Activated B cell treated with CpG ODN at 0.5 μM for 24 hours (primary cell): ENCODE measurements at regions of chr12 and their contacts with region 1.

Region 1: GRCh38 chr12:109844983-109845823 is 12.0 kb upstream of the TRPV4 start:
- DNase-seq: peak; percentile 90
- ATAC-seq: peak; percentile 99
- H3K4me3 Mint-ChIP-seq: no peak overlapping the region
- H3K27ac Mint-ChIP-seq: peak overlapping the region; percentile 9
- H3K4me1 Mint-ChIP-seq: peaks cover 6% of the 10 kb centered on the region
- H3K27me3 Mint-ChIP-seq: no peaks in the 10 kb centered on the region
- CTCF ChIP-seq: peak; percentile 69

Region 2: DNA sequence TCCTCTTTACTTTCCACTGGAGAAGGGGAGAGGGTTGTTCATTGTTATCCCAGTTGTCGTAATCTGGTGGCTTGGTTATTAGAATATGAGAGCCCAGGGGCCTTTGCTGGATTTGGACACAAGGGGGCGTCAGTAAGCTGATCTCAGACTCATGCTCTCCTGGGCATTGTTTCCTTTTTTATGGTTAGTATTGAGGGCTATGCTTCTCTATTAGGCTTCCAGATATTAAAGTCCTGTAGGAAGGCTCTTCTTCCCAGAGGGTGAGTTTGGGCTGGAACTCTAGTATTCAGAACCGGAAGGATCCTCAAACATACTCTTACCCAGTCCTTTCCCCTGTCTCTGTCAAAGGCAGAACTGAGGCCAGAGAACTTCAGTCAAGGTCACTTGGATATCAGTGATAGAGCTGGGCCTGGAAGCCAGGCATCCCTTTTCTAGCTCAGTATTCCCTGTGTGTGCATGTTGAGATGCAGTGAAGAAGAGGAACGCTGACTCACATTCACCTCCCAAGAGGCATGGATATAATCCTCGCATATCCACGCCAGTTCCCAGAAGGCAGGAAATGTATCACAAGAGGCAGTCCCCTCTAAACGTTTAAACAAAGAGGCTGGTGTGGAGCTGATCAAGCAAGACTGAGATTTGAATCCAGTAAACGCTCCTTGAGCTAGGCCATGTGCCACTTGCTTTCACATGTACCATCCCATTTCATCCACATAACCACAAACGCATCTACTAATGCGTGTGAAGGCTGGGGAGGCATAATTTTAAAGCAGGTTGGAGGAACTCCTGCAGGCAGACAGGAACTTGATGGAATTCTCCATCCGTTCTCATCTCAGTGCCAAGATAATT is 326.2 kb before region 1 on chr12:
- CTCF ChIA-PET with region 1: interaction called, 4 read pairs
- POLR2A ChIA-PET with region 1: no interaction called
- intact Hi-C with region 1: loop called (anchors 2 kb)
- DNase-seq: no peak
- ATAC-seq: no peak
- H3K4me3 Mint-ChIP-seq: no peak overlapping the region
- H3K27ac Mint-ChIP-seq: no peak overlapping the region
- H3K4me1 Mint-ChIP-seq: no peaks in the 10 kb centered on the region
- H3K27me3 Mint-ChIP-seq: no peaks in the 10 kb centered on the region
- CTCF ChIP-seq: no peak

Region 3: GRCh38 chr12:109597795-109598427 is 247.3 kb before region 1 on chr12:
- CTCF ChIA-PET with region 1: interaction called, 9 read pairs
- POLR2A ChIA-PET with region 1: no interaction called
- intact Hi-C with region 1: loop called (anchors 2 kb)
- DNase-seq: peak; percentile 48
- ATAC-seq: peak; percentile 65
- H3K4me3 Mint-ChIP-seq: no peak overlapping the region
- H3K27ac Mint-ChIP-seq: no peak overlapping the region
- H3K4me1 Mint-ChIP-seq: peaks cover 8% of the 10 kb centered on the region
- H3K27me3 Mint-ChIP-seq: no peaks in the 10 kb centered on the region
- CTCF ChIP-seq: peak; percentile 66

Region 4: DNA sequence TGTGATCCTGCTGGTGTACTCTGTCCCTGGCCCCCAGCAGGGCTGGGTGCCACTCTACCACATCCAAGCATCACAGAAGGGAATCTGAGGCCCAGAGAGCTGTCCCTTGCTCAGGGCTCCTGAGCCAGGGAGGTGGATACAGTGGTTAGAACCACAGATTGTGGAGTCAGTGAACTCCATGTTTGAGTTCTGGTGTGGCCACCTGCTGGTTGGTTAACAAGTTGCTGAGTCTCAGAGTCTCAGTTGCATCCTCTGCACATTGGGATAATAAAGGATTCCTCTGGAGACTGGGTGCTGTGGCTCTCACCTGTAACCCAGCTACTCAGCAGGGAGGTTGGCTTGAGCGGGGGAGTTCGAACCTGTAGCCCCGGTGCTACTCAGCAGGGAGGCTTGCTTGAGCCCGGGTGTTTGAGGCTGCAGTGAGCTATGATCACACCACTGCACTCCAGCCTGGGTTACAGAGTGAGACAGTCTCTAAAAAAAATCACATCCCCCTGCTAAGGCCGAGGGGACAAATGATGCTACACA is 232.2 kb before region 1 on chr12:
- CTCF ChIA-PET with region 1: no interaction called
- POLR2A ChIA-PET with region 1: no interaction called
- intact Hi-C with region 1: no loop called
- DNase-seq: no peak
- ATAC-seq: no peak
- H3K4me3 Mint-ChIP-seq: no peak overlapping the region
- H3K27ac Mint-ChIP-seq: no peak overlapping the region
- H3K4me1 Mint-ChIP-seq: no peaks in the 10 kb centered on the region
- H3K27me3 Mint-ChIP-seq: peaks cover 39% of the 10 kb centered on the region
- CTCF ChIP-seq: no peak

Region 5: GRCh38 chr12:109744986-109745942 is 99.9 kb before region 1 on chr12:
- CTCF ChIA-PET with region 1: no interaction called
- POLR2A ChIA-PET with region 1: no interaction called
- intact Hi-C with region 1: no loop called
- DNase-seq: no peak
- ATAC-seq: no peak
- H3K4me3 Mint-ChIP-seq: no peak overlapping the region
- H3K27ac Mint-ChIP-seq: no peak overlapping the region
- H3K4me1 Mint-ChIP-seq: no peaks in the 10 kb centered on the region
- H3K27me3 Mint-ChIP-seq: no peaks in the 10 kb centered on the region
- CTCF ChIP-seq: no peak

Region 6: DNA sequence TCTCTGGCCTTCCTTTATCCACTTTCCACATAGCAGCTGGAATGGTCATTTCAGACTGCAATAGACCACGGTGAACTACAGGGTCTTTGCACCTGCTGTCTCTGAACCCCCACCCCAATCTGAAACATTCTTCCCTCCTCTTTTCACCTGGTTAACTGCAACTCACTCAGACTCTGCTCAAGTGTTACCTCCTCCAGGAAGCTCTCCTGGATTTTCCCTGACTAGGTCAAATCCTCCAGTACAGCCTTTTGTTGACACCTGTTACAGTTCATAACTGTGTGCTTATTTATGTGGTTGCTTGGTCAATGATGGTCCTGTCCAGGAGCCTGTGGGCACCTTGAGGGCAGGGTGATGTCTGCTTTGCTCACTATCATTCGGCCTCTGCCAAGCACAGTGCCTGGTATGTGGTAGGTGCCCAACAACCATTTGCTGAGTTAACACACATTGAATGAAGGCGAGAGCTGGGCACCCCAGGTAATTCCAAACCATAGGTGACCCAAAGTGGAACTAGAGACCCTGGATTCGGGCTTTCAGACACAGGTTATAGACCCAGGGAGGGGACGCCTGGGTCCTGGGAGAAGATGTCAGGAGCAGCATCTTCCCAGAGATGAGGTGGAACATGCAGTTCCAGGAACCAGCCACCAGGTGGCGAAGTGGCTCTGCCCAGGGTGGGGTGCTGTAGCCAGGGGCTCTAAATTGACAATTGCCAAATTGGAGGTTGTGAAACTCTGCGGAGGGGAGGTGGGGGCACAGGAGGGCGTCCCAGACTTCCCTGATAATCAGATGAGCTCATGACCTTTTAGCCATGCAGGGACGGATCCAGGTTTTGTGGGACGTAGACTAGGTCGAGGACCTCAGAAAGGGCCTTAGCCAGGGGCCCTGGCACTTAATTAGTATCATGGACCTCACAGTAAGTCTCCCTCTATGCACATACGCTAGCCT is 40.1 kb before region 1 on chr12:
- CTCF ChIA-PET with region 1: interaction called, 23 read pairs
- POLR2A ChIA-PET with region 1: no interaction called
- intact Hi-C with region 1: loop called (anchors 1 kb)
- DNase-seq: peak; percentile 62
- ATAC-seq: peak; percentile 84
- H3K4me3 Mint-ChIP-seq: no peak overlapping the region
- H3K27ac Mint-ChIP-seq: no peak overlapping the region
- H3K4me1 Mint-ChIP-seq: peaks cover 2% of the 10 kb centered on the region
- H3K27me3 Mint-ChIP-seq: peaks cover 3% of the 10 kb centered on the region
- CTCF ChIP-seq: peak; percentile 88

Region 7: DNA sequence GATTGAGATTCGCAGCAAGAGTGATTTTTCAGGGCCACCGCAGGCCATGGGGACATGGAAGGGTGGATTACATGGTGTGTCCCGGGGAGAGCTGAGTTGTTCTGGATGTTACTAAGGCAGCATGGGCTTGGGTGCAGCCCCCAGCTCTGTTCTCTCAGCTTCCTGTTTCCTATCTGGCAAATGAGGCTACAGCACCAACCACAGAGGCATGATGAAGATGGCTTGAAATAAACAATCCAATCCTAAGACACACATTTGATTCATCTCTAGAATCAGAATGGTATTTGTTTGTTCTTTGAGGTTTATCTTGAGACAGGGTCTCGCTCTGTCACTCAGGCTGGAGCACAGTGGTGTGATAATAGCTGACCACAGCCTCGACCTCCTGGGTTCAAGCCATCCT is 13.6 kb after region 1 on chr12:
- CTCF ChIA-PET with region 1: interaction called, 10 read pairs
- POLR2A ChIA-PET with region 1: no interaction called
- intact Hi-C with region 1: no loop called
- DNase-seq: no peak
- ATAC-seq: no peak
- H3K4me3 Mint-ChIP-seq: no peak overlapping the region
- H3K27ac Mint-ChIP-seq: no peak overlapping the region
- H3K4me1 Mint-ChIP-seq: peaks cover 4% of the 10 kb centered on the region
- H3K27me3 Mint-ChIP-seq: no peaks in the 10 kb centered on the region
- CTCF ChIP-seq: no peak

Region 8: GRCh38 chr12:109888179-109889020 is 43.2 kb after region 1 on chr12:
- CTCF ChIA-PET with region 1: interaction called, 10 read pairs
- POLR2A ChIA-PET with region 1: no interaction called
- intact Hi-C with region 1: no loop called
- DNase-seq: no peak
- ATAC-seq: peak; percentile 58
- H3K4me3 Mint-ChIP-seq: peak overlapping the region; percentile 63
- H3K27ac Mint-ChIP-seq: peak overlapping the region; percentile 95
- H3K4me1 Mint-ChIP-seq: peaks cover 54% of the 10 kb centered on the region
- H3K27me3 Mint-ChIP-seq: no peaks in the 10 kb centered on the region
- CTCF ChIP-seq: no peak

Region 9: GRCh38 chr12:110012137-110012536 is 166.9 kb after region 1 on chr12:
- CTCF ChIA-PET with region 1: no interaction called
- POLR2A ChIA-PET with region 1: no interaction called
- intact Hi-C with region 1: loop called (anchors 5 kb)
- DNase-seq: peak; percentile 60
- ATAC-seq: peak; percentile 90
- H3K4me3 Mint-ChIP-seq: peak overlapping the region; percentile 84
- H3K27ac Mint-ChIP-seq: peak overlapping the region; percentile 95
- H3K4me1 Mint-ChIP-seq: peaks cover 80% of the 10 kb centered on the region
- H3K27me3 Mint-ChIP-seq: no peaks in the 10 kb centered on the region
- CTCF ChIP-seq: no peak

Region 10: DNA sequence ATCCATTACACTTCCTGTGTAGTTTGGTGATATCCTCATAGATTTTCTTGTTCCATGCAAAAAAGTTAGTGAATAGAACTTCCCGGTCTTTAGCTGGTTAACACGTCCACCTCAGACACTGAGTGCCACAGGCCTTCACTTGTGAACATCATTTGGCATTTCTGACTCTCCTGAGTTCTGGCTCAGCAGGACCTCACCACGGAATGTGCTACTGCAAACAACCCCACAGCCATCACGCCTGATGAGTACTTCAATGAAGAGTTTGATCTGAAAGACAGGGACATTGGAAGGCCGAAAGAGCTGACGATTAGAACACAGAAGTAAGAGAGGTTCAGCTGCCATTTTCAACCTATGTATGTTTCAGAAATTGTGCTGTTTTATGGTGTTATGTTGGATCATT is 183.1 kb after region 1 on chr12:
- CTCF ChIA-PET with region 1: no interaction called
- POLR2A ChIA-PET with region 1: no interaction called
- intact Hi-C with region 1: no loop called
- DNase-seq: no peak
- ATAC-seq: no peak
- H3K4me3 Mint-ChIP-seq: no peak overlapping the region
- H3K27ac Mint-ChIP-seq: no peak overlapping the region
- H3K4me1 Mint-ChIP-seq: peaks cover 13% of the 10 kb centered on the region
- H3K27me3 Mint-ChIP-seq: no peaks in the 10 kb centered on the region
- CTCF ChIP-seq: no peak